ENCODE measurements at regions of chr11 and their contacts with region 1.

Region 1: DNA sequence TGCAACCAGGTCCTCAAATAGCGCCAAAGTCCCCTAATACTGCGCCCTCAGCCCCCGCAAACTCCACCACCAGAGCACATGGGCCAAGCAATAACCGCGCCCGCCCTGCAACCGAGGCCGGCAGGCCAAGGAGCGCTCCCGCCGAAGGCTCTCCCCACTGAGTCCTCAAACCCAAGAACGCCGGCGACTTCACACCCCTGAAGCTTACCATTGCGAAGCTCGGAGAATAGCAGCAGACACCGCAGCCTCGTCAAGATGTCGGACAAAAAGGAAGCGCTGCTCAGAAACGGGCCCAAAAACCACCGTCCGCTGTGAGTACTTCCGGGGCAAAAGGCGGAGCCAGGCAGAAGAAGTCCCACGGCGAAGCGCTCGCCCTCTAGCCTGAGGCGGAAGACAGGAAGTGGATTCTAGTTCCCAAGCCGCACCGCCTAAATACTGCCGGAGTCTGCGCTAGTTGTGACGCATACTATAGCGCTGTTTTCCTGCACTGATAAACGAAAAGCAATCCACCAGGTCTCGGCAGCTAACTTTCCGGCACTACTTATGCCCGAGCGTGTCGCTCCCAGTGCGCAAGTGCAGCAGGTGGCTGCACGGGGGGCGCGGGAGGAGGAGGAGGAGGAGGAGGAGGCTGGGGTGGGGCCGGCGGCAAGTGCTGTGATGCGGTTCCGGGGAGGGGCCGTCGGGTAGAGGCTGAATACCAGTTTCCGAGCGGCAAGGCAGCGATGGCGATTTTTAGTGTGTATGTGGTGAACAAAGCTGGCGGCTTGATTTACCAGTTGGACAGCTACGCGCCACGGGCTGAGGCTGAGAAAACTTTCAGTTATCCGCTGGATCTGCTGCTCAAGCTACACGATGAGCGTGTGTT is at the starts of genes RPS25 and TRAPPC4:
- DNase-seq: peak; percentile 96
- H3K4me3 Mint-ChIP-seq: peak within 1 kb of the TSS; percentile 90
- H3K27ac Mint-ChIP-seq: peak within 1 kb of the TSS; percentile 100
- H3K4me1 Mint-ChIP-seq: peaks cover 56% of the 10 kb centered on the region
- H3K27me3 Mint-ChIP-seq: no peaks in the 10 kb centered on the region
- total RNA-seq, gene RPS25: 1,257 to 1,287 TPM
- total RNA-seq, gene TRAPPC4: 67.0 to 71.1 TPM

Region 2: DNA sequence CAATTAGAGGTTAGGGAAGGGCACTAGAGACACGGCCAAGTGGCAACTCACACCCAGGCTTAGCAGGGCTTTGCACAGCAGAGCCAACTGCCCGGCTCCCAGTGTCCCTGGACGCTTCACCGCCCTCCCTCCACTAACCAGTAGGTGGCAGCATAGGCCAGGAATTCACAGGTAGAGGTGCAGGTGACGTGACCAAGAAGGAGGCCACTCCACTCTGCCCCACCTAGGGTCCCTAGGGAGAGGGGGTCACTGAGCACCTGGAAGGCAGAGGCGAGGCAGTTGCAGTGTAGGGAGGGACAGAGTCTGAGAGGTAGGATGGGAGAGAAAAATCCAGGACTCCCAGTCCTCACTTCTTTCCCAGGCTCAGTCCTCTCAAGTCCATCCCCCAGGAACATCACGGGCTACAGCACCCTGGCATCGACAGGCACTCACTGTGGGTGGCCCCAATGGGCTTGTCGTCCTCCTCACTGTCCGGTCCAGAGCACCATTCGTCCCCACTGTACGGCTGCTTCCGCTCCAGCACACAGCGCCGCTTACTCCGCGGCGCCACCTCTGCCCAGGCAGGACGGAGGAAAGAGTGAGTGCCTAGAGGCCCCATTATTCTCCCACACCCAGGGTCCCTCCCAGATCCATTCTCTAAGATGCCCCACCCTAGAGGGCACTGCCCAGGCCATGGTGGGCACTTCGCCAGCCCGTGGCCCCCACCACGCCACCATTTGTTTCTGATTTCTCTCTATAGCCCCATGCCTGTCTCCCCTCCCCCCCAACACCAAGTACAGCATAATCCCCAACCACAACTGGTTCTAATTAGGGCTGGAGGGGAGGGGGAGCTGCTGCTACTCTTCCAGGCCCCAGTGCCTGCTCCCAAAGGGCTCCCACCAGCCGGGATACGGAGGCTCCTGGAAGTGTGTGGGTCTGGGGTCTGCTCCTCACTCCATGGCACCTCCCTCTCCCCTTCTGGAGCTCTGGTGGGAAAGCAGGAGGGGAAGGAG is 111.0 kb before region 1 on chr11:
- CTCF ChIA-PET with region 1: no interaction called
- POLR2A ChIA-PET with region 1: no interaction called
- DNase-seq: peak; percentile 88
- H3K4me3 Mint-ChIP-seq: no peak overlapping the region
- H3K27ac Mint-ChIP-seq: peak overlapping the region; percentile 45
- H3K4me1 Mint-ChIP-seq: peaks cover 34% of the 10 kb centered on the region
- H3K27me3 Mint-ChIP-seq: no peaks in the 10 kb centered on the region

Region 3: GRCh38 chr11:119030329-119031049 is 12.2 kb after region 1 on chr11 and contains the start of gene SLC37A4:
- CTCF ChIA-PET with region 1: interaction called, 29 read pairs
- POLR2A ChIA-PET with region 1: interaction called, 115 read pairs
- DNase-seq: peak; percentile 98
- H3K4me3 Mint-ChIP-seq: peak within 1 kb of the TSS; percentile 77
- H3K27ac Mint-ChIP-seq: peak within 1 kb of the TSS; percentile 78
- H3K4me1 Mint-ChIP-seq: peaks cover 29% of the 10 kb centered on the region
- H3K27me3 Mint-ChIP-seq: no peaks in the 10 kb centered on the region
- total RNA-seq, gene SLC37A4: 31.6 to 33.9 TPM